SK-N-SH (cell line): ENCODE measurements at regions of chr2 and their contacts with region 1.

Region 1: DNA sequence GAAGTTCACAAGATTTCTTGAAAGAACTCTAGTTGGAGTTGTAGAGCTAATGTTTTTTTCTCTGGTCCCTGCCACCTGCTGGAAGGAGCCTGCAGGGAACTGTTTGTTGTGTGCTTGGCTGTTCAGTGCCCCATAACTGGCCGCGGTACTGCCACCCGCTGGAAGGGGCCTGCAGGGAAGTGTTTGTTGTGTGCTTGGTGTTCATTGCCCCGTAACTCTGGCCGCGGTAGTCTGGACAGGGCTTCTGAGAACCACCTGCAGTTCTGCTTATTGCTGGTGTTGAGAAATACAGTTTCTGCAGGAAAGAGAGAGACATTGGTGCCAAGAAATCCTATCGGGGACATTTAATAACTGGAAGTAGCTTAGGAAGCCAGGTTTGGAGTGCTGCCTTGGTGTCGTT is 58.1 kb downstream of the AGAP1 start:
- DNase-seq: peak; percentile 76
- H3K4me3 ChIP-seq: no peak overlapping the region; a peak in 1 of 4 replicates
- H3K27ac ChIP-seq: no peak overlapping the region
- H3K4me1 ChIP-seq: peaks cover 0 to 18% of the 10 kb centered on the region in 2 experiments; a peak in 1 of 4 replicates
- H3K27me3 ChIP-seq: no peaks in the 10 kb centered on the region
- CTCF ChIP-seq: peak; percentile 59
- EP300 ChIP-seq: no peak
- RAD21 ChIP-seq: peak; percentile 67

Region 2: DNA sequence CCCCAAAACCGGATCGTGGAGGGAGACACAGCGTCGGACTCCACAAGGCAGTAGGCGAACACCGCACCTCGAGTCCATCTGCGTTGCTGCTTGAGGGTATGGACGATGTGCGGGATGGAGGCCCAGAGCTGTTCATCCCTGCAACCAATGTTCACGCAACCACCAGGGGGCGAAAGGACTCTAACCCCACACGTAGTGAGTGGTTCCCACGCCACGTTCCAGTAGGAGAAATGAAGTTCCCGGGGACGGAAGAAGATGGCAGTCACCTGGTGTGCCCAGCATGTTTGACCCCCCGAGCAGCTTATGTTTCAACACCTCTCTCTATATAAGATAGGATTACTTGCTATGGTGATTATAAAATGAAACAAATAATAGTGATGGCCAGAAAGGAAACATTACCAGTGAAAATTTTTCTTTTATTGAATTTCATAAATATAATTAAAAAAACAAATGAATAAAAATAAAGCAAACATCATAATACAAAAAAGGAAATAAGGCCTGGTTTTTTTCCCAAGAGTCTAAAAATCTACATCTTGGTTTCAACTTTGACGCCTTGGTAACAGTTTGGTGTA is 415.9 kb before region 1 on chr2:
- CTCF ChIA-PET with region 1: interaction called, 10 read pairs
- POLR2A ChIA-PET with region 1: no interaction called
- DNase-seq: peak; percentile 78
- H3K4me3 ChIP-seq: no peak overlapping the region; a peak in 1 of 4 replicates
- H3K27ac ChIP-seq: no peak overlapping the region
- H3K4me1 ChIP-seq: no peaks in the 10 kb centered on the region
- H3K27me3 ChIP-seq: no peaks in the 10 kb centered on the region; the same call in 1 of the 2 replicates
- CTCF ChIP-seq: peak; percentile 74
- EP300 ChIP-seq: no peak
- RAD21 ChIP-seq: peak; percentile 84

Region 3: GRCh38 chr2:235538144-235538639 is 13.8 kb before region 1 on chr2:
- CTCF ChIA-PET with region 1: interaction called, 11 read pairs
- POLR2A ChIA-PET with region 1: no interaction called
- DNase-seq: no peak
- H3K4me3 ChIP-seq: no peak overlapping the region
- H3K27ac ChIP-seq: no peak overlapping the region
- H3K4me1 ChIP-seq: peaks cover 0 to 11% of the 10 kb centered on the region in 2 experiments; a peak in 1 of 4 replicates
- H3K27me3 ChIP-seq: no peaks in the 10 kb centered on the region
- CTCF ChIP-seq: no peak
- EP300 ChIP-seq: no peak
- RAD21 ChIP-seq: no peak

Region 4: DNA sequence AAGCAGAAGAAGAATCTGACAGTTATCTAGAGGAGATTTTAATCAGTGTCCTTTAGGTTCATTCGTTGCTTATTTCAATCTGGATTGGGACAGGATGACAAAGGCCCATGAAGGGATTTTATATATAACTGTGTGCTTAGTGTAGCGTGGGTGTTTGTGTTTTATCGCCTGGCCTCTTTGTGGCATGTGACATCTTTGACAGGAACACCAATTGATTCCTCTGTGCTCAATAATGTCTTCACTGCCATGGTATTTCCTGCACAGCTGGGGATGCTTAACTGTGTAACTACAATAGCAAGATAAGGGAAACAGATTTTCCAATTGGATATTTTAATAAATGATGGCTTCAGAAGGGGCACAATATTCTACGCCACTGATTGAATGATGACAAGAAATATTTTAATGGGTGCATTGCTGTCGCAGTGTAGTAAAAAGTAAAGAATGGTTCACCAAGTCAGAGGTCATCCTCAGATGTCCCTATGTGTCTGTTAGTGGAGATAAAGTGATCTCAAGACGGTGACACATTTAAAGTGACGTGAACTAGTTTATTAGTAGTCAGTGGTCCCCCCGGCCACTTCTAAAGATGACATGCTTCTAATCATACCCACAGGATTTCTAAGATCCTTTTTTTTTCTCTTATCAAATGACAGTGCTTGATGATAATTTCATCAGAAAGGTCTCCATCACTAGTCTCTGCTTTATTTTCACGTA is 102.3 kb after region 1 on chr2:
- CTCF ChIA-PET with region 1: no interaction called
- POLR2A ChIA-PET with region 1: no interaction called
- DNase-seq: no peak
- H3K4me3 ChIP-seq: no peak overlapping the region
- H3K27ac ChIP-seq: peak overlapping the region in 1 of 2 experiments; percentile 17; a peak in 1 of 4 replicates
- H3K4me1 ChIP-seq: peaks cover 12 to 17% of the 10 kb centered on the region in 2 experiments
- H3K27me3 ChIP-seq: no peaks in the 10 kb centered on the region
- CTCF ChIP-seq: no peak
- EP300 ChIP-seq: no peak
- RAD21 ChIP-seq: no peak